Naive thymus-derived CD4-positive, alpha-beta T cell (primary cell): ENCODE measurements at regions of chr2 and their contacts with region 1.

Region 1: GRCh38 chr2:241064008-241064801 is 37.9 kb downstream of the MTERF4 start:
- DNase-seq: peak in 8 of 9 donors; percentile 37 to 51 (median 40)
- ATAC-seq: peak; percentile 84
- H3K4me3 ChIP-seq: no peak overlapping the region
- H3K4me3 Mint-ChIP-seq: peak overlapping the region in 8 of 10 donors; percentile 55 to 78 (median 66)
- H3K27ac ChIP-seq: no peak overlapping the region
- H3K27ac Mint-ChIP-seq: peak overlapping the region in 6 of 9 donors; percentile 22 to 81 (median 56)
- H3K4me1 ChIP-seq: peaks cover 0 to 8% of the 10 kb centered on the region in 2 donors
- H3K4me1 Mint-ChIP-seq: peaks cover 0 to 9% (median 0%) of the 10 kb centered on the region in 7 donors
- H3K27me3 ChIP-seq: no peaks in the 10 kb centered on the region
- H3K27me3 Mint-ChIP-seq: peaks cover 0 to 4% (median 0%) of the 10 kb centered on the region in 5 donors

Region 2: DNA sequence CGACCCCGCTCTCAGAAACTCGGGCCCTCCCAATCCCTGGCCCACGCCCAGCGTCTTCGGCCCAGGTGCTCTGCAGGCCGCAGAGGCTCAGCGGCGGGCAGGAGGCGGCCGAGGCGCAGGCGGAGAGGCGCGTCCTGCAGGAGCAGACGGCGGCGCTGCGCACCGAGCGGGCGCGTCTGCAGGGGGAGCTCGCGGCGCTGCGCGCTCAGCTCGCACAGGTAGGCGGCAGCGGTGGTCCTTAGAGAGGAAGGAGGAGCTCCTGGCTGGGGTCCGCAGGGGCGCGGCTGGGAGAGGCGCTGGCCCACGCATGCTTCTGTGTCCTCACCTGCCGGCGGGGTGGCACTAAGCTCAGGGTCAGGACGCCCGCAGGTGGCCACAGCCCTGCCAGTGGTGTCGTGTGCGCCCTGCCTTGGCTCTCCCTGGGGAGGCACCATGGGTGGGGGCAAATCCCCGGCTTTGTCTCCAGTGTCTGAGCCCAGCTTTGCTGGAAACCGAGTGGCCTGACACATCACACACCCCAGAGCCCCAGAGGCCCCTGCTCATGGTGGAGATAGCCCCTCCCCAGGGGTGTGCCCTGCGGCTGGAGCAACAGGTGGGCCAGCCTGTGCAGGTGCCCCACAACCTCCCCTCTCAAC is 80.7 kb before region 1 on chr2:
- CTCF ChIA-PET with region 1: no interaction called
- POLR2A ChIA-PET with region 1: no interaction called
- intact Hi-C with region 1: loop called in 1 of 2 experiments (anchors 5 kb)
- DNase-seq: peak in 7 of 9 donors; percentile 27 to 55 (median 42)
- ATAC-seq: peak; percentile 78
- H3K4me3 ChIP-seq: no peak overlapping the region
- H3K4me3 Mint-ChIP-seq: peak overlapping the region in 1 of 10 donors; percentile 30
- H3K27ac ChIP-seq: no peak overlapping the region
- H3K27ac Mint-ChIP-seq: no peak overlapping the region
- H3K4me1 ChIP-seq: no peaks in the 10 kb centered on the region
- H3K4me1 Mint-ChIP-seq: peaks cover 0 to 5% (median 2%) of the 10 kb centered on the region in 7 donors
- H3K27me3 ChIP-seq: no peaks in the 10 kb centered on the region
- H3K27me3 Mint-ChIP-seq: peaks cover 0 to 14% (median 0%) of the 10 kb centered on the region in 5 donors